Activated T-helper 2 cell treated with anti-CD3 and anti-CD28 coated beads, Interferon-gamma antibody, Interleukin-2, Interleukin-4, amounts not matched to agents 10 μg/mL and 5 μg/mL and 100 μg/mL, durations not matched to agents 14 hours and 24 hours and 36 hours (primary cell): ENCODE measurements at regions of chr2 and their contacts with region 1.

Region 1: DNA sequence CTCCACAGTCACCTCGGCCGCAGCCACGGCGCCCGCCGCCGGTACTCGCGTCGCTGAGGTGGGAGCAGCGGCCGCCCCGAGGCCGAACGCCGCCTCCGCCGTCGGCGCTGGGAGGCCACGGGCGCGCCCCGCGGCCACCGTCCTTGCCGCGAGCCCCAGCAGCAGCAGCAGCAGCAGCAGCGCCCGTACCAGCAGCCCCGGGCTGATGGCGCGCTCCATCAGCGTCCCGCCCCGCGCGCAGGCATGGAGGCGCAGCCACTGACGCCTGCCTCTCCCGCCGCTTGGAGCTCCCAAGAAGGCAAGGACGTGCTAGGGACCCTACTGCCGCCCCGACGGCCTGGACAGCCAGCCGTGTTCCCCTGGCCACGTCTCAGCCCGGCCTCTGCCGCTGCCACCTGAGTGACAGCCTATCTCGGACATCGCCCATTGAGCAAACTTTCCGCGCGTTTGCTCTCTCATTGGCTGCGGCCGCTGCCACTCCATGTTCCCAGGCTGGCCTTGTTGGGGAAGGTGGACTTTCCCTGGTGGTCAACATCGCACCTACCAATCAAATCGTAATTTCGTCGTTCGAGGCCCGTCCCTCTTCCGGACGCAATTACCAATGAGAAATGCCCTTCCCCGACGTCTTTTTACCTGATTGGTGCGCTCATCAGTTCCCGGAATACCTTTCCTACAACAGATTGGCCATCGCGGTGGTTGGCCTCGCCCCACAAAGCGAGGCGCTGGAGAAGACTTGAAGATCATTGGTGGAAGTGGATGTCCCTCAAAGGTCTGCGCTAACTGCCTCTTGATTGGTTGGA is at the start of gene EIF2AK3:
- DNase-seq: peak; percentile 96
- H3K4me3 Mint-ChIP-seq: peak within 1 kb of the TSS; percentile 89
- H3K27ac Mint-ChIP-seq: peak within 1 kb of the TSS; percentile 87
- H3K4me1 Mint-ChIP-seq: peaks cover 27% of the 10 kb centered on the region
- H3K27me3 Mint-ChIP-seq: no peaks in the 10 kb centered on the region
- total RNA-seq, gene EIF2AK3: 20.0 and 22.5 TPM in 2 replicates

Region 2: GRCh38 chr2:88239781-88240180 is 387.5 kb before region 1 on chr2:
- intact Hi-C with region 1: no loop called
- DNase-seq: no peak
- H3K4me3 Mint-ChIP-seq: no peak overlapping the region
- H3K27ac Mint-ChIP-seq: no peak overlapping the region
- H3K4me1 Mint-ChIP-seq: no peaks in the 10 kb centered on the region
- H3K27me3 Mint-ChIP-seq: peaks cover 2% of the 10 kb centered on the region

Region 3: GRCh38 chr2:88458633-88459032 is 168.6 kb before region 1 on chr2:
- intact Hi-C with region 1: no loop called
- DNase-seq: no peak
- H3K4me3 Mint-ChIP-seq: no peak overlapping the region
- H3K27ac Mint-ChIP-seq: no peak overlapping the region
- H3K4me1 Mint-ChIP-seq: no peaks in the 10 kb centered on the region
- H3K27me3 Mint-ChIP-seq: peaks cover 28% of the 10 kb centered on the region

Region 4: GRCh38 chr2:88590998-88591613 is 36.1 kb before region 1 on chr2:
- intact Hi-C with region 1: loop called (anchors 1 kb)
- DNase-seq: no peak
- H3K4me3 Mint-ChIP-seq: no peak overlapping the region
- H3K27ac Mint-ChIP-seq: no peak overlapping the region
- H3K4me1 Mint-ChIP-seq: peaks cover 3% of the 10 kb centered on the region
- H3K27me3 Mint-ChIP-seq: no peaks in the 10 kb centered on the region

Region 5: DNA sequence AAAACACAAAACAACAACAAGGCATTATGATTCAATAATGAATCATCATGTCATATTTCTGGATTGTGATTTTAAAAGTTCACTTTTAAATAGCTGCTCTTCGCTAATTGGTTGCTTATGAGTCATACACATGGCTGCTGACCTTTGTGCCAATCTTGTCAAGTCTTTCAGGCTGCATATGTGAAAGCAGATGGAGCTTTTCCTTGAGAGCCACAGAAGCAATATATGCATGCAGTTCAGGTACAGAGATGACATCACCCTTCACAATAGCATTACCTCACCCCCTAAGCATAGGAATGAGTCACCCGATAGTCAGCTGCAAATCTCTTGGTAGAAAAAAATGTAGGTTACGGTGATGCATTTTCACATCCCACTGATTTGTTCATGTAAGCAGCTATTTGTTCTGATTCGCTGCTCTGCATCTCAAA is 27.2 kb before region 1 on chr2:
- intact Hi-C with region 1: loop called (anchors 1 kb)
- DNase-seq: peak; percentile 51
- H3K4me3 Mint-ChIP-seq: no peak overlapping the region
- H3K27ac Mint-ChIP-seq: peak overlapping the region; percentile 56
- H3K4me1 Mint-ChIP-seq: peaks cover 33% of the 10 kb centered on the region
- H3K27me3 Mint-ChIP-seq: no peaks in the 10 kb centered on the region

Region 6: DNA sequence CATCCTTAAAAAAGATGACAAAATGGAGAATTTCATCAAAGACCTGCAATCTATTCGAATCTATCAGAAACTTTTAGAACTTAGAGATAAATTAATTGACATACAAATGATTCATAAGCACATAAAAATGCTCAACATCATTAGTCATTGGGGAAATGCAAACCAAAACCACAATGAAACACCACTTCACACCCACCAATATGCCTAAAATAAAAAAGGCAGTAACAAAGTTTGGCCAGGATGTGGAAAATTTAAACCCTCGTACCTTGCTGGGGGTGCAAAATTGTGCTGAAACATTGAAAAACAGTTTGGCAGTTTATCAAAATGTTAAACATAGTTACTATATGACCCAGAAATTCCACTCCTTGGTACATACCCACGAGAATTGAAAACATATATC is 11.5 kb after region 1 on chr2:
- intact Hi-C with region 1: loop called (anchors 1 kb)
- DNase-seq: no peak
- H3K4me3 Mint-ChIP-seq: no peak overlapping the region
- H3K27ac Mint-ChIP-seq: peak overlapping the region; percentile 84
- H3K4me1 Mint-ChIP-seq: peaks cover 49% of the 10 kb centered on the region
- H3K27me3 Mint-ChIP-seq: no peaks in the 10 kb centered on the region

Region 7: GRCh38 chr2:88669371-88670214 is 42.3 kb after region 1 on chr2:
- intact Hi-C with region 1: loop called (anchors 2 kb)
- DNase-seq: no peak
- H3K4me3 Mint-ChIP-seq: no peak overlapping the region
- H3K27ac Mint-ChIP-seq: no peak overlapping the region
- H3K4me1 Mint-ChIP-seq: peaks cover 7% of the 10 kb centered on the region
- H3K27me3 Mint-ChIP-seq: peaks cover 7% of the 10 kb centered on the region

Region 8: GRCh38 chr2:88691339-88692183 is 64.3 kb after region 1 on chr2 and contains the start of gene RPIA:
- intact Hi-C with region 1: loop called (anchors 1 kb)
- DNase-seq: peak; percentile 98
- H3K4me3 Mint-ChIP-seq: peak within 1 kb of the TSS; percentile 86
- H3K27ac Mint-ChIP-seq: peak within 1 kb of the TSS; percentile 92
- H3K4me1 Mint-ChIP-seq: peaks cover 28% of the 10 kb centered on the region
- H3K27me3 Mint-ChIP-seq: no peaks in the 10 kb centered on the region
- total RNA-seq, gene RPIA: 67.1 and 68.4 TPM in 2 replicates